Naive thymus-derived CD4-positive, alpha-beta T cell (primary cell): ENCODE measurements at regions of chr4 and their contacts with region 1.

Region 1: DNA sequence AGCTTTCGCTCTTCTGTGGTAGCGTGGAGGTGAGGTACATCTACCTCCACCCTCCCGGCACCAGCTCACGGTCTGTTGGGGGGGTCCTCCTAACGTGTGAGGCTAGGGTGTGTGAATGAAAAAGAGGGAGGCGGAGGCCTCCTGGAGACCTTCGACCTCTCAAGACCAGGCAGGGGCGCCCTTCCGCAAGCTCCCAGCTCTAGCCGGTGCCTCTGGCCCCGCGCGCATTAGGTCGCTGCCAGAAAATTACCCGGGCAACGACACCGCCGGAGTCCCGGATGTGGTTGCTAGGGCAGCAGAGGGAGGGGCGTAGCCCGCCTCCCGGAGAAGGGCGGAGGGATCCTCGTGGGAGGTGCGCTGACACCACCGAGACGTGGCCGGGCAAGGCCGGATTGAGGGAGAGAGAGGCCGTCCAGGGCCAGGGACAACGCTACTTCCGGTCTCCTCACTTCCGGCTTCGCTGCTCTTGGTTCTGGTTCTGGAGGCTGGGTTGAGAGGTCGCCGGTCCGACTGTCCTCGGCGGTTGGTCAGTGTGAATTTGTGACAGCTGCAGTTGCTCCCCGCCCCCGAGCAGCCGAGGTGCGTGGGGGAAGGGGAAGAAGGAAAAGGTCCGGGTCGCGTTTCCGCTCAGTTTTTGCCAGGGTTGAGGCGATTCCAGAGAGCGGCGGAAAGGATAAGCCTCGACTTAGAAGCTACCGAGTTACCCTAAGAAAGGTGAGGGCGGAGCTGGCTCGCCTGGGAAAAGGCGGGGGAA is at the starts of genes ARFIP1 and TIGD4:
- DNase-seq: peak; percentile 86 to 97 (median 93)
- ATAC-seq: peak; percentile 94
- H3K4me3 ChIP-seq: peak within 1 kb of the TSS; percentile 97
- H3K4me3 Mint-ChIP-seq: peak within 1 kb of the TSS; percentile 92 to 100 (median 96)
- H3K27ac ChIP-seq: peak within 1 kb of the TSS; percentile 80
- H3K27ac Mint-ChIP-seq: peak within 1 kb of the TSS; percentile 90 to 99 (median 95)
- H3K4me1 ChIP-seq: peaks cover 13 to 16% of the 10 kb centered on the region in 2 donors
- H3K4me1 Mint-ChIP-seq: peaks cover 33 to 60% (median 44%) of the 10 kb centered on the region in 7 donors
- H3K27me3 ChIP-seq: no peaks in the 10 kb centered on the region
- H3K27me3 Mint-ChIP-seq: peaks cover 0 to 29% (median 6%) of the 10 kb centered on the region in 5 donors
- total RNA-seq, gene ARFIP1: 5.1 to 20.2 (median 15.1) TPM
- total RNA-seq, gene TIGD4: 0.15 to 0.19 TPM in 2 of 5 experiments, not detected in the others

Region 2: DNA sequence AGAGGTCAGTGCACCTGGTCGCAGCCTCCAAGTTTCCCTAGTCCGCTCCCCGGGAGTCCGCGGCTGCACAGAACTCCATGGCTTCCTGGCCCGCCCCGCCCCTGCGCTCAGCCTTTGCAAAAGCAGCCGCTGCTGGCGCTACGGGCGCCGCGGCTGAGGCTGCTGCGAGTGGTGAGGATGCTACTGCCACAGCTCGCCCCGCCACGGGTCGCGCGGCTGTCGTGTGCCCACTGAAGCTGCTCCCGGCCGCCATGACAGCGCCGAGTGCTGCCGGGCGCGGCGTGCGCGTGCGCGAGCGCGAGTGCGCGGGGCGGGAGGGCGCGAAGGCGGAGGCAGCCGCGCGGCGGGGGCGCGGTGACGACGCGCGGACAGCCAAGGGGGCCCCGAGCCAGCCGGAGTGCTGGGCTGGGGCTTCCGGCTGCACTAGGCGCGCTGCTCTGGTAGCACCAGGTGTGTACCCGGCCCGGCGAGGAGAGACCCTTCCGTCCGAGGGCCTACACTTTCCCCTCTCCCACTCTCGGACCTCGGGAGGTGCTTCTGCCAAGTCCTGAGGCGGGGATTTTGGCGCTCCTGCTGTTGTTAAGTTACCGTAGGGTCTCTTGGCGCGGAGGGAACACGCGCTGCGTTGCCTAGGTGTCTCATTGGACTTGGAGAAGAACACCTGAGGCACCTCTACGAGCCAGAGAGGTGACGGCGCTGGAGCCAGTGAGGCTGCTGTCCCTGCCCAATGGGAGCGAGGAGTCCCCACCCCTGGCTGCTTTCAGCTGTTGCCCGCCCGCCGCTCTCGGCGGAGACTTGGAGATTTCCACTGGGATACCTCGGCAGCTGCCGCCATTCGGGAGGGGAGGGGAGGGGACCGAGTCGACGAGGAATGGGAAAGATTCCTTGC is 1764.0 kb before region 1 on chr4:
- CTCF ChIA-PET with region 1: no interaction called
- POLR2A ChIA-PET with region 1: no interaction called
- intact Hi-C with region 1: loop called in 1 of 2 experiments (anchors 1 kb)
- DNase-seq: peak; percentile 76 to 89 (median 87)
- ATAC-seq: peak; percentile 88
- H3K4me3 ChIP-seq: peak overlapping the region; percentile 99
- H3K4me3 Mint-ChIP-seq: peak overlapping the region; percentile 95 to 100 (median 99)
- H3K27ac ChIP-seq: peak overlapping the region; percentile 97
- H3K27ac Mint-ChIP-seq: peak overlapping the region; percentile 90 to 100 (median 98)
- H3K4me1 ChIP-seq: peaks cover 18 to 32% of the 10 kb centered on the region in 2 donors
- H3K4me1 Mint-ChIP-seq: peaks cover 20 to 34% (median 32%) of the 10 kb centered on the region in 7 donors
- H3K27me3 ChIP-seq: no peaks in the 10 kb centered on the region
- H3K27me3 Mint-ChIP-seq: no peaks in the 10 kb centered on the region

Region 3: GRCh38 chr4:151760712-151761527 is 1018.8 kb before region 1 on chr4 and contains the start of gene GATB:
- CTCF ChIA-PET with region 1: no interaction called
- POLR2A ChIA-PET with region 1: no interaction called
- intact Hi-C with region 1: loop called (anchors 1 to 2 kb)
- DNase-seq: peak; percentile 67 to 97 (median 93)
- ATAC-seq: peak; percentile 99
- H3K4me3 ChIP-seq: peak within 1 kb of the TSS; percentile 87
- H3K4me3 Mint-ChIP-seq: peak within 1 kb of the TSS; percentile 88 to 99 (median 98)
- H3K27ac ChIP-seq: peak within 1 kb of the TSS; percentile 69
- H3K27ac Mint-ChIP-seq: peak within 1 kb of the TSS; percentile 94 to 99 (median 98)
- H3K4me1 ChIP-seq: peaks cover 9 to 13% of the 10 kb centered on the region in 2 donors
- H3K4me1 Mint-ChIP-seq: peaks cover 7 to 24% (median 18%) of the 10 kb centered on the region in 7 donors
- H3K27me3 ChIP-seq: no peaks in the 10 kb centered on the region
- H3K27me3 Mint-ChIP-seq: peaks cover 0 to 8% (median 4%) of the 10 kb centered on the region in 5 donors
- total RNA-seq, gene GATB: 10.5 to 17.3 (median 14.2) TPM

Region 4: GRCh38 chr4:152679414-152680281 is 100.0 kb before region 1 on chr4 and contains the start of gene TMEM154:
- CTCF ChIA-PET with region 1: interaction called, 4 read pairs
- POLR2A ChIA-PET with region 1: interaction called, 4 read pairs
- intact Hi-C with region 1: loop called (anchors 1 to 2 kb)
- DNase-seq: peak; percentile 57 to 85 (median 77)
- ATAC-seq: peak; percentile 95
- H3K4me3 ChIP-seq: peak within 1 kb of the TSS; percentile 81
- H3K4me3 Mint-ChIP-seq: peak within 1 kb of the TSS; percentile 78 to 97 (median 95)
- H3K27ac ChIP-seq: peak within 1 kb of the TSS; percentile 77
- H3K27ac Mint-ChIP-seq: peak within 1 kb of the TSS; percentile 92 to 98 (median 96)
- H3K4me1 ChIP-seq: peaks cover 22% of the 10 kb centered on the region in 2 donors
- H3K4me1 Mint-ChIP-seq: peaks cover 39 to 71% (median 49%) of the 10 kb centered on the region in 7 donors
- H3K27me3 ChIP-seq: no peaks in the 10 kb centered on the region
- H3K27me3 Mint-ChIP-seq: no peaks in the 10 kb centered on the region
- total RNA-seq, gene TMEM154: 21.3 to 46.8 (median 36.9) TPM

Region 5: GRCh38 chr4:152937336-152938236 is 157.9 kb after region 1 on chr4:
- CTCF ChIA-PET with region 1: no interaction called
- POLR2A ChIA-PET with region 1: no interaction called
- intact Hi-C with region 1: loop called in 1 of 2 experiments (anchors 2 kb)
- DNase-seq: peak in 5 of 9 donors; percentile 10 to 37 (median 16)
- ATAC-seq: peak; percentile 46
- H3K4me3 ChIP-seq: peak overlapping the region; percentile 35
- H3K4me3 Mint-ChIP-seq: peak overlapping the region; percentile 74 to 90 (median 86)
- H3K27ac ChIP-seq: no peak overlapping the region
- H3K27ac Mint-ChIP-seq: peak overlapping the region in 1 of 9 donors; percentile 47
- H3K4me1 ChIP-seq: peaks cover 0 to 8% of the 10 kb centered on the region in 2 donors
- H3K4me1 Mint-ChIP-seq: peaks cover 13 to 27% (median 25%) of the 10 kb centered on the region in 7 donors
- H3K27me3 ChIP-seq: peaks cover 3 to 9% of the 10 kb centered on the region in 2 donors
- H3K27me3 Mint-ChIP-seq: peaks cover 44 to 78% (median 60%) of the 10 kb centered on the region in 5 donors

Region 6: DNA sequence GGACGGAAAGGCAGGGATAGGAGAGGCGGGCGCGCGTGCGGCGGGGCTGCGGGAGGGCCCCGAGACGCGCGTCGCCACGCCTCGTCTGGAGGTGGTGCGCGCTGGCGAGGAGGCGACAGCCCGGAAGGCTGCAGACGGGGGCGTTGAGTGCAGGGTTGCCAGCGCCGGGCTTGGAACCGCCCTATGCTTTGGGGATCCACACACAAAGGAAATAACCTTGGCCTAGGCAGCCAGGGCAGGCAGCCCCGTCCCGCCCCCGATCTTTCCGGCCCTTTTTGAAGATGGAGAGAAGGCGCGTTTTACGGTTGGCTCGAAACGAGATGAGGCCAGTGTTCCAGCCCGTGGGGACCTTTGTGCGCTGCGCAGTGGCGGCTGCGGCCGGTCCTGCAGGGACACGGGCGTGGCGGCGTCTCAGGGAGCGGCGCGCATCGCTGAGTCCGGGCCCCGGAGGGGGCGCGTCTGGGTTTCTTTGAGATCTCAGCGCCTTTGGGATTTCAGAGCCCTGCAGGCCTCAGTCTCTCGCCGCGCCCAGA is 373.7 kb after region 1 on chr4:
- CTCF ChIA-PET with region 1: no interaction called
- POLR2A ChIA-PET with region 1: no interaction called
- intact Hi-C with region 1: loop called in 1 of 2 experiments (anchors 2 kb)
- DNase-seq: peak; percentile 53 to 84 (median 78)
- ATAC-seq: peak; percentile 95
- H3K4me3 ChIP-seq: peak overlapping the region; percentile 81
- H3K4me3 Mint-ChIP-seq: peak overlapping the region; percentile 91 to 96 (median 92)
- H3K27ac ChIP-seq: peak overlapping the region; percentile 69
- H3K27ac Mint-ChIP-seq: peak overlapping the region; percentile 78 to 90 (median 85)
- H3K4me1 ChIP-seq: peaks cover 3 to 12% of the 10 kb centered on the region in 2 donors
- H3K4me1 Mint-ChIP-seq: peaks cover 23 to 42% (median 38%) of the 10 kb centered on the region in 7 donors
- H3K27me3 ChIP-seq: no peaks in the 10 kb centered on the region
- H3K27me3 Mint-ChIP-seq: peaks cover 0 to 43% (median 0%) of the 10 kb centered on the region in 5 donors

Region 7: GRCh38 chr4:153759407-153760316 is 980.0 kb after region 1 on chr4 and contains the start of gene RNF175:
- CTCF ChIA-PET with region 1: no interaction called
- POLR2A ChIA-PET with region 1: no interaction called
- intact Hi-C with region 1: loop called in 1 of 2 experiments (anchors 1 kb)
- DNase-seq: peak in 8 of 9 donors; percentile 20 to 32 (median 29)
- ATAC-seq: peak; percentile 54
- H3K4me3 ChIP-seq: peak within 1 kb of the TSS; percentile 34
- H3K4me3 Mint-ChIP-seq: peak within 1 kb of the TSS; percentile 40 to 91 (median 84)
- H3K27ac ChIP-seq: peak within 1 kb of the TSS; percentile 54
- H3K27ac Mint-ChIP-seq: peak within 1 kb of the TSS in 8 of 9 donors; percentile 75 to 95 (median 90)
- H3K4me1 ChIP-seq: peaks cover 0 to 26% of the 10 kb centered on the region in 2 donors
- H3K4me1 Mint-ChIP-seq: peaks cover 6 to 74% (median 61%) of the 10 kb centered on the region in 7 donors
- H3K27me3 ChIP-seq: no peaks in the 10 kb centered on the region
- H3K27me3 Mint-ChIP-seq: peaks cover 0 to 71% (median 14%) of the 10 kb centered on the region in 5 donors
- total RNA-seq, gene RNF175: 6.4 to 11.1 (median 8.4) TPM in 4 of 5 experiments, not detected in the other